ENCODE measurements at regions of chr3 and their contacts with region 1.

Region 1: DNA sequence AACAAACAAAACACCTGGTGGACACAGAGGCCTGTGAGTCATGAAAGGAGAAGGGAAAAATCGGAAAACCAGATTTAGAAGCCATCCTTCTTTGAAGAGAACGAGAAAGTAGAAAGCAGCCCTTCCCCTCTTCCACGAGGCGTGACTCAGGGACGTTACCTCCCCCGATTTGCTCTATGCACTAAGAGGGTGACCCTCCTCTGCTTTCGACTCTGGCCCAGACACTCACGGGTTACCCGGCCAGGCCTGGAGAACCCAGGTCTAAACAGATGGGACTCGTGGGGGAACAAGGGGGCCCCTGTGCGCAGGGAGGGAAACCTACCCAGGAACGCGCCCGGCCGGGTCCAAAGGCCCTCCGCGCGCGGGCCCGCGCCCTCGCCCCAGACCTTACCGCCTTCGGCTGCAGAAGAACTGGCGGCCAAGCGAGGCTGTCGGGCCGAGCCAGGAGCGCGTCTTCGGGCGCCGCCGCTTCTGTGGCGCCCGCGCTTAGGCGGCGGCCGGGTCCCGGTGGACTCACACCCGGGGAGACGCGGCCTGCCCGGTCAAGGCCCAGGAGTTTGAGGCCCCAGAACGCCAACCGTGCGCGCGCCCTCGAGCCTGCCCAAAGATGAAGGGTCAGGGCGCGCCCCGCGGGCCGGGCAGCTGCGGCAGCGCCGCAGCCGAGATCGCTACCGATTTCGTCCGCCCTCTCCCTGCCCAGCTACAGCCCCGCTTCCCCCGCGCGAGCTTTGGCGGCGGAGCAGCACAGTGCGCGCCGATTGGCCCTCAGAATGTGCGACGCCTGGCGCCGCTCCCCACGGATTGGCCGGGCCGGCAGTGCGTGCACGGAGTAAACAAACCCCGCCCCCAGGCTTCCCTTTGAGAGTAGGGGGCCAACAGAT is at the start of gene TFDP2:
- DNase-seq: peak; percentile 96
- ATAC-seq: peak; percentile 100
- total RNA-seq, gene TFDP2: 56.1 TPM

Region 2: DNA sequence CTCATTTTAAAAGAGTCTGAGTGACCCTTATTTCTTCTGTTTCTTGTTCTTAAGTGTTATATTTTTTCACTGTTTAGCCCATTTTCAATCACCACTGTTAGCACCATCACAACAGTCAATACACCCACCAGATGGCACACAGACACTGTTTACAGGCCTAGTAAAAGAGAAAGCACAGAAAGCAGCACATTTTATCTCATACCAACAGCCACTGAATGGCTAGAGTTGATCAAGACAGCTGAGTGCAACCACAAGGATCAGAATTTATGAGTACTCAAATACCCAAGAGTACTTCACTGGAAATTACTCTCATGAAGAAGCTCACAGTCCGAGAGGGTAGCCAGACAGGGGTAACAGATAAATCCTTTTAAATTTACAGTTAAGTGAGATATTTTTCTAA is 126.7 kb before region 1 on chr3:
- intact Hi-C with region 1: loop called (anchors 5 kb)
- DNase-seq: no peak
- ATAC-seq: no peak

Region 3: DNA sequence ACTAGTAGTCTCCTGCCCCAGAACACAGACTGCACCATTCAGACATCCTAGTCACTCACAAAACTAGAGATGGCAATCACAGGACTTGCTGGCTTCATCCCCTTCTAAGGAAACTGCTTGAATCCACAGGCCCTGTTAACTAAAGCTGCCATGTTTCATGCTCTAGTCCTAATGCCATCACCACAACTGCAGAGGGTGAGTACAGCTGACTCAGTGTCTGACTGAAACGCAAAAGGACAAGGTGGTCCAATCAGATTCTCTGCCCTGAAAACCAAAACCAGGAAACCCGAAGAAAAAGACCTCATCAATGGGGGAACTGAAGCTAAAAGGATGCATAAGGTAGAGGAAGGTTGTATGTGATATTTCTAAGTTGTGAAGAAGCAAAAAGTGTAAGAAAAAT is 25.5 kb after region 1 on chr3:
- intact Hi-C with region 1: loop called (anchors 1 kb)
- DNase-seq: no peak
- ATAC-seq: no peak

Region 4: GRCh38 chr3:142315083-142315482 is 166.1 kb after region 1 on chr3:
- intact Hi-C with region 1: no loop called
- DNase-seq: no peak
- ATAC-seq: no peak

Region 5: GRCh38 chr3:142337994-142338393 is 189.0 kb after region 1 on chr3:
- intact Hi-C with region 1: no loop called
- DNase-seq: no peak
- ATAC-seq: peak; percentile 28